ENCODE measurements at regions of chr10 and their contacts with region 1.

Region 1: DNA sequence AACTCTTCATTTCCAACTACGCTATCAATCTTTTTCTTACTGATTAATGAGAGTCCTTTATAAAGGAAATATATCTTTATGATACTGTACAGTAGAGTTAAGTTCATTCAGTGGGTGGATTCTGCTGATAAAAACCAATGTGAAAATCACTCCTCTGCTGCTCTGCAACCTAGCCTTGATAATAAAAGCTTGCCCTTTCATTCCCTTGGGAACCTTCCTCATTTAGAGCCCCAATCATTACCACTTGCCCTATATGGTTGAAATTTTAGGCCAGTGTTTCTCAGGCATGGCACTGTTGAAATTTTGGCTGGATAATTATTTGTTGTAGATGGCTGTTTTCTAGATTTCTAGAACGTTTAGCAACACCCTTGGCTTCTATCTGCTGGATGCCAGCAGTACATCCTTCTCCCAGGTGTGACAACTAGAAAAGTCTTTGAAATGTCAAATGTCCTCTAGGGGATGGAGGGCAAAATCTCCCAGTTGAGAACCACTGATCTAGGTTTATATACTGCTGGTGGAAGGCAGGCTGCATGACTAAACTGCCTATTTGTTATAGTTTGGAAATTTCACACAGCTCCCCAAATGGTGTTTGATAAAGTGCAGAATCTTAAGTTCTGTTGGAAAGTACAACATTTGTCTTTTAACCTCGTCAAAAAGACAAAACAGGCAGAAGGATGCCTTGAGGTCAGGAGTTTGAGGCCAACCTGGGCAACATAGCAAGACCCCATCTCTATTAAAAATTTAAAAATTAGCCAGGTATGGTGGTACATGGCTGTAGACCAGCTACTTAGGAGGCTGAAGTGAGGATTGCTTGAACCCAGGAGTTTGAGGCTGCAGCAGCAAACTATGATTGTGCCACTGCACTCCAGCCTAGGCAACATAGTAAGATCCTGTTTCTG is 8.9 kb upstream of the SIRT1 start:
- DNase-seq: no peak
- H3K4me3 ChIP-seq: no peak overlapping the region
- CTCF ChIP-seq: no peak

Region 2: DNA sequence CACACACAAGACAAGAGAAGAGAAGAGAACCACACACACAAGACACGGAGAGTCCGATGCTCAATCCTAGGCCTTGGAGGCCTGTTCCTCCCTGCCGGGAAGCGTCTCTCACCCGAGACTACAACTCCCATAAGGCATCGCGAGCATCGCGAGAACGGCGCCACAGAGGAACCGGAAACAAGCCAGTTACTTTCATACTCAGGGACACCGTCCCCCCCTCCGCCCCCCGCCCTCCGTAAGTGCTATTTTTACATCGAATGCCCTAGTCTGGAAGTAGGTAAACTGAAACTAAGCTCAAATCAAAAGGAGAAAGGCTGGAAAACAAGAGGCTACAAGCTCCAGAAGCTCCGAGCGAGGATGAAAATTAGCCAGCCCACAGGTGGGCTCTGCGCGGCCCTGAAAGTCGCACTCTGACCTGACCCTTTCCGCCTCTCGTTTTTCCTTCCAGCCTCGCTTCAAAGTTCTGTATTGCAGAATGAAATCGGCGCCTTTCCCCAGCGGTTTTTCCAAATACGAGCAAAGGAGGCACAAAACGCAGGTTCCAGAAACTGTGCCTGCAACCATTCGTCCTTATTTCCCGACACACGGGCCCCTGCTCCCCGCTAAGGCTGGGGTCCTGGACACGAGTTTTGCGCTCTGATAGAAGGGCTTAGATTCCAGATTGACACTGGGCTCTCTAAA is 26.1 kb before region 1 on chr10:
- CTCF ChIA-PET with region 1: interaction called, 14 read pairs
- POLR2A ChIA-PET with region 1: no interaction called
- DNase-seq: peak; percentile 69
- H3K4me3 ChIP-seq: peak overlapping the region; percentile 76
- CTCF ChIP-seq: no peak